H1 (cell line): ENCODE measurements at regions of chr2 and their contacts with region 1.

Region 1: DNA sequence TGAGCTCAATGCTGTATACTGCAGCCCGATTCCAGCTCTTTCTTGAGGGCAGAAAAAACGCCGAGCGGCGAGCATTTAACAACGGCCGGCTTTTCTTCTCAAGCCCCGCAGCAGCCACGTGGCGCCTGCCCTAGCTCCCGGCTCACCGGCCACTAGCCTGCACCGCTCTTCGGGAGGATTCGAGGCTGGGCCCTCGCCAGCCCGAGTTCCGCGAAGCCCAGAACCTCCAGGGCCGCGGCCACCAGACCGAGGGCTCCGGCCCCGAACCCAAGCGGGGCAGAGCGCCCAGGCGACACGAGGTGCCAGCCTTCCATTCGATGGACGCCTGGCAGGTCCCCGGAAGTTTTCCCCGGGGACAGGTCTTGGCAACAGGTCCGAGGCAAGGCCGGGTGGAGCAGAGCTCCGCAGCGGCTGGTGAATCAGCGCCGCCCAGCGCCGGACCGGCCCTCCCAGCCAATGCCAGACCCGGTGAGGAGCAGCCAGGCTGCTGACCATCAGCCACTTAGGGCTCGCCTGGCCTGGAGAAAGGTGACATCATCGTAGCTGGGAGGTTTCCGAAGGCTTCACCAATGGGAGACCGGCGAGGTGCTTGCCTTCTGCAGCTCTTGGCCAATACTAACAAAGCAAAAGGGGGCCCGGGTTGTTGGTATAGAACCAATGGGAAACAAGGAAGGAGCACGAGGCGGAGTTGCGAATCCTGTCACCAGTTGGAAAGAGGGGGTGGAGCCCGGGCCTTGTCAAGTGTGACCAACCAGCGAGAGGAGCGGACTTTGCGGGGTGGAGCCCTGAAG is 544 bp upstream of the MXD1 start:
- DNase-seq: peak; percentile 98 to 100
- H3K4me3 ChIP-seq: peak overlapping the region; percentile 53 to 76 (median 70)
- H3K27ac ChIP-seq: peak overlapping the region; percentile 93
- H3K4me1 ChIP-seq: no peaks in the 10 kb centered on the region
- H3K27me3 ChIP-seq: no peaks in the 10 kb centered on the region
- CTCF ChIP-seq: peak in 2 of 3 experiments; percentile 24 to 31; a peak in 2 of 4 replicates
- EP300 ChIP-seq: no peak
- POLR2A ChIP-seq: peak; percentile 96 to 97
- RAD21 ChIP-seq: peak; percentile 22 to 49; a peak in 3 of 4 replicates

Region 2: GRCh38 chr2:69518841-69519240 is 395.5 kb before region 1 on chr2:
- CTCF ChIA-PET with region 1: no interaction called
- POLR2A ChIA-PET with region 1: no interaction called
- DNase-seq: peak; percentile 53 to 70
- H3K4me3 ChIP-seq: no peak overlapping the region
- H3K27ac ChIP-seq: no peak overlapping the region
- H3K4me1 ChIP-seq: peaks cover 0 to 3% (median 1%) of the 10 kb centered on the region in 4 experiments; a peak in 1 of 7 replicates
- H3K27me3 ChIP-seq: no peaks in the 10 kb centered on the region
- CTCF ChIP-seq: no peak
- EP300 ChIP-seq: no peak
- POLR2A ChIP-seq: no peak
- RAD21 ChIP-seq: no peak

Region 3: GRCh38 chr2:69694894-69695849 is 219.2 kb before region 1 on chr2:
- CTCF ChIA-PET with region 1: no interaction called
- POLR2A ChIA-PET with region 1: no interaction called
- DNase-seq: no peak
- H3K4me3 ChIP-seq: no peak overlapping the region
- H3K27ac ChIP-seq: no peak overlapping the region
- H3K4me1 ChIP-seq: peaks cover 0 to 3% (median 0%) of the 10 kb centered on the region in 4 experiments; a peak in 1 of 7 replicates
- H3K27me3 ChIP-seq: no peaks in the 10 kb centered on the region
- CTCF ChIP-seq: no peak
- EP300 ChIP-seq: no peak
- POLR2A ChIP-seq: no peak
- RAD21 ChIP-seq: no peak

Region 4: GRCh38 chr2:69902213-69902922 is 12.0 kb before region 1 on chr2:
- CTCF ChIA-PET with region 1: interaction called, 7 read pairs
- POLR2A ChIA-PET with region 1: interaction called, 10 read pairs
- DNase-seq: no peak
- H3K4me3 ChIP-seq: no peak overlapping the region
- H3K27ac ChIP-seq: no peak overlapping the region
- H3K4me1 ChIP-seq: no peaks in the 10 kb centered on the region
- H3K27me3 ChIP-seq: no peaks in the 10 kb centered on the region
- CTCF ChIP-seq: no peak
- EP300 ChIP-seq: no peak
- POLR2A ChIP-seq: no peak
- RAD21 ChIP-seq: no peak

Region 5: DNA sequence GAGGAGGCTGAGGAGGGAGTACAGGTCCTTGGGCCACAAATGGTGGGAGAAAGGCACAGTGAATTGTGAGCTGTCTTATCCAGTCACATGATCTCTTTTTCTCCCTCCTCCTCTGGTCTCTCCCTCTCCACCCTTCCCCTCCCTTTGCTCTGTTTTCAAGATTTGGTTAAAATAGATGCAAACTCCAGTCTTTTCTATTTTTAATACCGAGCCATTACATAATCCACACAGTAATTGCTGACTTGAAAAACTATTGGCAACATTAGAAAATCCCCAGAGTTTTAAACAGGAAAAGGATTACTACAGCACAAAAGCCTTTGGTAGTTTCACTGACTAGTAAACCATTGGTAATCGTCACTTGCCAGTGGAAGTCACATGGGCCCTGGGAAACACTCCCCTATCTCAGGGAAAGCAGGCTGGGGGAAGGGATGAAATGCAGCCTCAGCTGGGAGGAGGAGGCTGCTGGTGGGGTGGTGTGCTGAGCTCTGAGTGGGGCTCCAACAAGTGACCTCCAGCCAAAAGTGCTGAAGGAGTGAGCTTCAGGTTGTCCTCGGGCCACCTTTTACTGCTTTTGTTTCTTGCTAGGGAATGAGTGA is 115.5 kb after region 1 on chr2:
- CTCF ChIA-PET with region 1: interaction called, 4 read pairs
- POLR2A ChIA-PET with region 1: interaction called, 10 read pairs
- DNase-seq: peak in 1 of 2 experiments; percentile 61
- H3K4me3 ChIP-seq: no peak overlapping the region
- H3K27ac ChIP-seq: peak overlapping the region; percentile 49; the same call in 1 of the 2 replicates
- H3K4me1 ChIP-seq: peaks cover 2 to 7% (median 5%) of the 10 kb centered on the region in 4 experiments; a peak in 6 of 7 replicates
- H3K27me3 ChIP-seq: no peaks in the 10 kb centered on the region
- CTCF ChIP-seq: no peak
- EP300 ChIP-seq: no peak
- POLR2A ChIP-seq: peak in 1 of 2 experiments; percentile 81; a peak in 2 of 3 replicates
- RAD21 ChIP-seq: peak in 1 of 2 experiments; percentile 8; a peak in 1 of 4 replicates

Region 6: GRCh38 chr2:70062268-70062667 is 147.9 kb after region 1 on chr2:
- CTCF ChIA-PET with region 1: interaction called, 23 read pairs
- POLR2A ChIA-PET with region 1: interaction called, 12 read pairs
- DNase-seq: no peak
- H3K4me3 ChIP-seq: no peak overlapping the region
- H3K27ac ChIP-seq: no peak overlapping the region
- H3K4me1 ChIP-seq: no peaks in the 10 kb centered on the region
- H3K27me3 ChIP-seq: no peaks in the 10 kb centered on the region
- CTCF ChIP-seq: peak in 2 of 3 experiments; percentile 8 to 22; a peak in 2 of 4 replicates
- EP300 ChIP-seq: no peak
- POLR2A ChIP-seq: no peak
- RAD21 ChIP-seq: peak; percentile 23 to 47; a peak in 3 of 4 replicates

Region 7: DNA sequence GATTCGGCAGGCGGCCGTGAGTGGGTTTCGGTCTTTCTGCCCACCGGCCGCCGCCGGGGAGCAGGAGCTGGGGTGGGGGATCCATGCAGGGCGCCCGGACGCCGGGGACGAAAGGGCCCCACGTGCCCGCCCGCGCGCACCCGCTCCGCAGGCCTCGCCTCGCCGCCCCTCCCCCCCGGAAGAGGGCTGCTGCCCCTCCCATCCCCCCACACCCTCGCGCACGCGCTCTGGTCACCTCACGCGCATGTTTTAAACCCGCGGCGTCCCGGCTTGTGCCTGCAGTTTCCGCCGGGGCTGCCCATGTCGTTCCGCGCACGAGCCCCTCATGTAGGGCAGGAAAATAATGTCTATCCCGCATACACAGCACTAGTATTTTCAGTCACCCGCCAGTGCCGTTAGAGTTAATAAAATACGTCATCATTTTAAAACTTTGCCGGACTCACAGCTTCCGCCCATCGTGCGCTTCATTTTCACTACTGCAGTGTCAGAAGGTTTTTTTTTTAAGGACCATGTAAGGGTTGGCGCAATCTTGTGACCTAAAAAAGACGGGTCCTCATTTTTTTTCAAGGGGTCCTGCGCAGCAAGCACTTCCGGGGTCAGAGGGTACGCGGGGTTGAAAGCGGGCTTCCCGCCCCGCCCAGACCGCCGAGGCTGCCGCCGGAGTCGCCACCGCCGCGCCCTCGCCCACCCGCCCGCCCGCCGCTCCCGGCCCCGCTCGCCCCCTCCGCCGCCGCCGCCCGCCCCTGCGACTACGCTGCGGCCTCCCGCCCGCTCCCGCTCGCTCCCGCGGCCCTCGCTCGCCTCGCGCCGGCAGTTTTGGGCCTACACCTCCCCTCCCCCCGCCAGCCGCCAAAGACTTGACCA is 172.7 kb after region 1 on chr2 and contains the start of gene PCBP1:
- CTCF ChIA-PET with region 1: interaction called, 25 read pairs
- POLR2A ChIA-PET with region 1: interaction called, 180 read pairs
- DNase-seq: peak; percentile 73 to 95
- H3K4me3 ChIP-seq: peak within 1 kb of the TSS; percentile 83 to 99 (median 98)
- H3K27ac ChIP-seq: peak within 1 kb of the TSS; percentile 100
- H3K4me1 ChIP-seq: peaks cover 6 to 18% (median 15%) of the 10 kb centered on the region in 4 experiments; a peak in 5 of 7 replicates
- H3K27me3 ChIP-seq: no peaks in the 10 kb centered on the region
- CTCF ChIP-seq: no peak
- EP300 ChIP-seq: peak in 1 of 2 experiments; percentile 8; a peak in 1 of 3 replicates
- POLR2A ChIP-seq: peak; percentile 90 to 95
- RAD21 ChIP-seq: 0 out of 4 replicates have a peak, but pooled peaks of 1 of the 2 experiments have one; percentile 8
- total RNA-seq, gene PCBP1: 493 and 511 TPM in 2 replicates

Region 8: GRCh38 chr2:70142590-70143313 is 228.4 kb after region 1 on chr2:
- CTCF ChIA-PET with region 1: interaction called, 17 read pairs
- POLR2A ChIA-PET with region 1: interaction called, 73 read pairs
- DNase-seq: peak; percentile 99
- H3K4me3 ChIP-seq: peak overlapping the region in 2 of 4 experiments; percentile 4 to 64; a peak in 5 of 8 replicates
- H3K27ac ChIP-seq: peak overlapping the region; percentile 70; the same call in 1 of the 2 replicates
- H3K4me1 ChIP-seq: peaks cover 19 to 26% (median 20%) of the 10 kb centered on the region in 4 experiments
- H3K27me3 ChIP-seq: no peaks in the 10 kb centered on the region
- CTCF ChIP-seq: peak; percentile 93 to 96 (median 94)
- EP300 ChIP-seq: peak; percentile 12 to 96
- POLR2A ChIP-seq: peak in 1 of 2 experiments; percentile 42; a peak in 1 of 3 replicates
- RAD21 ChIP-seq: peak; percentile 95 to 99

Region 9: DNA sequence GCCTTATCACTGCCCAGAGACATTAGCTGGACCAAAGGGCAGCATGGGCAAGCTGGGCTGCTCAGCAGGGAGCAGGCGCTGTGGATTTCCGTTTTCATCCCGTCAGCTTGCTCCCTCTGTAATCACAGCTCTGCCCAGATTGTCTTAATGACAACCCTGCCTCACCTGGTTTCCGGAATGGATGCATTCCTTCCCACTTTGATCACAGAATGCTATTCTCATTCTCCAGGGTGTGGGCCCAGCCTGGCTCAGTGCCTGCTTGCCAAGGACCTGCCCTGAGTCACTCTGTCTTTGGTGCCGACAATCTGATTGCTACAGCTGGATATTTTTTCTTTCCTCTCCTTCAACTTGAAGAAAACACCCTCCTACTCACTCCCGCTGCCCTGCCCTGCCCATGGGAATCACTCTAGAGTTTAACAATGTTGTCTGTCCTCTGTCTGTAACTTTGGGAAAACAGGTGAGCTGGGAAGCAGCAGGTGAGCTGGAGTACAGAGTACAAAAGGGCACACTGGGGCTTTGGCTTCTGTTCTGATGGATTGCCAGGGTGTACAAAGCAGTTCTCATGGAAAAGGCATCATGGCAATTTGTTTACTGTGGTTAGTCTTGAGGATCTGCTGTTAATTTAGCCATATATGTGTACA is 414.7 kb after region 1 on chr2:
- CTCF ChIA-PET with region 1: no interaction called
- POLR2A ChIA-PET with region 1: no interaction called
- DNase-seq: peak in 1 of 2 experiments; percentile 23
- H3K4me3 ChIP-seq: no peak overlapping the region
- H3K27ac ChIP-seq: no peak overlapping the region
- H3K4me1 ChIP-seq: peaks cover 0 to 6% (median 0%) of the 10 kb centered on the region in 4 experiments; a peak in 1 of 7 replicates
- H3K27me3 ChIP-seq: no peaks in the 10 kb centered on the region; a peak in 1 of 7 replicates
- CTCF ChIP-seq: no peak
- EP300 ChIP-seq: no peak
- POLR2A ChIP-seq: no peak
- RAD21 ChIP-seq: no peak